ENCODE measurements at regions of chr5 and their contacts with region 1.

Region 1: DNA sequence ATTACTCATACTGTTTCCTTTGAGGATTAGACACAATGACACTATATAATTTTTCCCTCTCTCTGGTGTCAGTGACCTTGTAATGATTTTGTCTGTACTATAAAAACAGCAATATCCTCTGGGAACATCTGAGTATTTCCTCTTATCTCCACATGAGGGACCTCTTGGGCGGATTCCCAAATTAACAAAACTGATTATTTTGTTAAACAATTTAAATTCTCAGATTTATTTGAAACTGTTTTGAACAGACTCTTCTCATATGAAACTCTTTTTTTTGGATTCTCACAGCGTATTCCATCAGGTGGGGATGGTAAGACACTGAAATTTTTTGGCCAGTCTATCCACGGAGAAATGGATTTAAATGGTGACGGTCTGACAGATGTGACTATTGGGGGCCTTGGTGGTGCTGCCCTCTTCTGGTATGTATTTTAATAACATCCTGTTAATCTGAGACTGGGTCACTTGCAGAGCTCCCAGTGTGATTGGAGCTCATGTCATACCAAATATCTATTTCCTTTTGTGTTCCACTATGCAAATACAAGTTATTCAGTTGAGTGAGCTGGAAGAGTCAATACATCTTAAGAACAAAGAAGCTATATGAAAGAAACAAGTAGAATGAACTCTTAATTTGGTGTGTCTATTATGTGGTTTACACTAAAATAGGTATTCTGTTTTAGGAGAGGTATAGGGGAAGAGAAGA is 73.8 kb upstream of the ITGA2 start:
- DNase-seq: peak; percentile 87
- H3K4me3 Mint-ChIP-seq: peak overlapping the region; percentile 57
- H3K27ac Mint-ChIP-seq: no peak overlapping the region
- H3K4me1 Mint-ChIP-seq: peaks cover 8% of the 10 kb centered on the region
- H3K27me3 Mint-ChIP-seq: peaks cover 10% of the 10 kb centered on the region

Region 2: GRCh38 chr5:52665559-52665958 is 249.8 kb before region 1 on chr5:
- intact Hi-C with region 1: loop called (anchors 10 kb)
- DNase-seq: no peak
- H3K4me3 Mint-ChIP-seq: no peak overlapping the region
- H3K27ac Mint-ChIP-seq: no peak overlapping the region
- H3K4me1 Mint-ChIP-seq: peaks cover 4% of the 10 kb centered on the region
- H3K27me3 Mint-ChIP-seq: peaks cover 30% of the 10 kb centered on the region

Region 3: GRCh38 chr5:52693280-52693679 is 222.0 kb before region 1 on chr5:
- intact Hi-C with region 1: loop called (anchors 1 kb)
- DNase-seq: peak; percentile 77
- H3K4me3 Mint-ChIP-seq: no peak overlapping the region
- H3K27ac Mint-ChIP-seq: no peak overlapping the region
- H3K4me1 Mint-ChIP-seq: peaks cover 4% of the 10 kb centered on the region
- H3K27me3 Mint-ChIP-seq: peaks cover 25% of the 10 kb centered on the region

Region 4: GRCh38 chr5:52787600-52788504 is 127.5 kb before region 1 on chr5 and contains the starts of genes ITGA1 and PELO:
- intact Hi-C with region 1: loop called (anchors 1 kb)
- DNase-seq: peak; percentile 85
- H3K4me3 Mint-ChIP-seq: peak within 1 kb of the TSS; percentile 91
- H3K27ac Mint-ChIP-seq: peak within 1 kb of the TSS; percentile 73
- H3K4me1 Mint-ChIP-seq: peaks cover 30% of the 10 kb centered on the region
- H3K27me3 Mint-ChIP-seq: peaks cover 30% of the 10 kb centered on the region
- total RNA-seq, gene ITGA1: 1.6 and 2.2 TPM in 2 replicates
- total RNA-seq, gene PELO: 20.0 and 21.2 TPM in 2 replicates

Measured in activated CD4-positive, alpha-beta T cell treated with anti-CD3 and anti-CD28 coated beads, Interleukin-2, amount 10 ng/mL, durations not matched to agents 24 days and 14 days (primary cell).